HepG2 (cell line): ENCODE measurements at regions of chr18 and their contacts with region 1.

Region 1: GRCh38 chr18:50644810-50645209 is 84.9 kb downstream of the MAPK4 start:
- DNase-seq: peak; percentile 33
- ATAC-seq: peak; percentile 99
- H3K4me3 ChIP-seq: no peak overlapping the region
- H3K27ac ChIP-seq: no peak overlapping the region
- H3K4me1 ChIP-seq: no peaks in the 10 kb centered on the region
- H3K27me3 ChIP-seq: no peaks in the 10 kb centered on the region
- CTCF ChIP-seq: peak; percentile 72
- EP300 ChIP-seq: no peak
- POLR2A ChIP-seq: no peak
- RAD21 ChIP-seq: no peak

Region 2: GRCh38 chr18:50629148-50629631 is 15.6 kb before region 1 on chr18:
- CTCF ChIA-PET with region 1: no interaction called
- POLR2A ChIA-PET with region 1: no interaction called
- in situ Hi-C with region 1: no loop called
- intact Hi-C with region 1: no loop called
- DNase-seq: no peak
- ATAC-seq: no peak
- H3K4me3 ChIP-seq: no peak overlapping the region
- H3K27ac ChIP-seq: no peak overlapping the region
- H3K4me1 ChIP-seq: no peaks in the 10 kb centered on the region
- H3K27me3 ChIP-seq: peaks cover 0 to 13% of the 10 kb centered on the region in 2 experiments; a peak in 2 of 5 replicates
- CTCF ChIP-seq: no peak
- EP300 ChIP-seq: no peak
- POLR2A ChIP-seq: no peak
- RAD21 ChIP-seq: no peak

Region 3: DNA sequence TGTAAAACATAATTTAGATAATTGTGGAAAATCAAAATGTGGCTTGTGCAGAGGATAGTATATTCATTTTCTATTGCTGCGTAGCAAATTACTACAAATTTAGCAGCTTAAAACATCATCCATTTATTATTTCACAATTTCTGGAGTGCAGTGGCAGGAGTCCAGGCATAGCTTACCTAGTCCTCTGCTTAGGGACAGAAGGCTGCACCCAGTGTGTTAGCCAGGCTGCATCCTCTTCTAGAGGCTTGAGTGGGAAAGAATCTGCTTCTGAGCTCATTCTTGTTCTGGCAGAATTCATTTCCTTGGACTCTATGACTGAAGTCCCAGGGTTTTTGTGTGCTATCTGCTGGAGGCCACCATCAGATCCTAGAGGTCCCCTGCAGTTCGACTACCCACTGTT is 135.3 kb after region 1 on chr18:
- CTCF ChIA-PET with region 1: no interaction called
- POLR2A ChIA-PET with region 1: no interaction called
- in situ Hi-C with region 1: no loop called
- intact Hi-C with region 1: loop called (anchors 5 kb)
- DNase-seq: no peak
- ATAC-seq: no peak
- H3K4me3 ChIP-seq: no peak overlapping the region
- H3K27ac ChIP-seq: no peak overlapping the region
- H3K4me1 ChIP-seq: no peaks in the 10 kb centered on the region
- H3K27me3 ChIP-seq: no peaks in the 10 kb centered on the region
- CTCF ChIP-seq: no peak
- EP300 ChIP-seq: no peak
- POLR2A ChIP-seq: no peak
- RAD21 ChIP-seq: no peak

Region 4: GRCh38 chr18:51168960-51169662 is 524.3 kb after region 1 on chr18:
- CTCF ChIA-PET with region 1: no interaction called
- POLR2A ChIA-PET with region 1: no interaction called
- in situ Hi-C with region 1: no loop called
- intact Hi-C with region 1: no loop called
- DNase-seq: no peak
- ATAC-seq: no peak
- H3K4me3 ChIP-seq: no peak overlapping the region
- H3K27ac ChIP-seq: no peak overlapping the region
- H3K4me1 ChIP-seq: no peaks in the 10 kb centered on the region
- H3K27me3 ChIP-seq: no peaks in the 10 kb centered on the region
- CTCF ChIP-seq: no peak
- EP300 ChIP-seq: no peak
- POLR2A ChIP-seq: no peak
- RAD21 ChIP-seq: no peak